ENCODE measurements at regions of chr16 and their contacts with region 1.

Region 1: GRCh38 chr16:81863630-81864352 is 84.7 kb downstream of the PLCG2 start:
- DNase-seq: no peak
- H3K4me3 ChIP-seq: no peak overlapping the region
- H3K27ac ChIP-seq: no peak overlapping the region
- H3K4me1 ChIP-seq: peaks cover 0 to 8% of the 10 kb centered on the region in 2 donors
- H3K27me3 ChIP-seq: no peaks in the 10 kb centered on the region
- CTCF ChIP-seq: no peak
- POLR2A ChIP-seq: no peak

Region 2: DNA sequence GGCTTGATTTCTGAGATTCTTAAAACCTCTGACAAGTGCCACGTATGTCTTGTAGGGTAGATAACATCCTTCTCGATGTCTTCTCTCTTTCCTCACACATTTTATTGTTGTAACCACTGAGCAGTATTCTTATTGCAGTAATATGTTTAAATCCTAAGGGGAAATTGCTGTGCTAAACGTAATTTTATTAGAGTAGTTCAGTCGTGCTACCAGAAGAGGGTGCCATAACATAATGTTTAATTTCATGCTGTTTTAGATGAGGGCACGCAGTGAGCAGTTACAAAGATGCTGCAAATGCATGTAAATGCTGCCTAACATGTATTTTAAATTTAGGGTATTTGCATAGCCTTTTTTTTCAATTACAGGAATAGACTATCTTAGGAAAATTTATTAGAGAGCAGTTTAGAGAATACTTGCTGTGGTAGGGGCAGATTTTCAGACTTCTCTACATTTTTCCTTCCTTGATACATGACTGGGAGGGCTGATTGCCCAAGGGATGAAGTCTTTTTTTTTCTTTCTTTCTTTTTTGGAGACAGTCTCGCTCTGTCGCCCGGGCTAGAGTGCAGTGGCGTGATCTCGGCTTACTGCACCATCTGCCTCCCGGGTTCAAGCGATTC is 497.4 kb before region 1 on chr16:
- intact Hi-C with region 1: loop called (anchors 10 kb)
- DNase-seq: no peak
- H3K4me3 ChIP-seq: no peak overlapping the region
- H3K27ac ChIP-seq: no peak overlapping the region
- H3K4me1 ChIP-seq: no peaks in the 10 kb centered on the region
- H3K27me3 ChIP-seq: no peaks in the 10 kb centered on the region
- CTCF ChIP-seq: peak; percentile 13 to 78 (median 56)
- POLR2A ChIP-seq: no peak

Region 3: DNA sequence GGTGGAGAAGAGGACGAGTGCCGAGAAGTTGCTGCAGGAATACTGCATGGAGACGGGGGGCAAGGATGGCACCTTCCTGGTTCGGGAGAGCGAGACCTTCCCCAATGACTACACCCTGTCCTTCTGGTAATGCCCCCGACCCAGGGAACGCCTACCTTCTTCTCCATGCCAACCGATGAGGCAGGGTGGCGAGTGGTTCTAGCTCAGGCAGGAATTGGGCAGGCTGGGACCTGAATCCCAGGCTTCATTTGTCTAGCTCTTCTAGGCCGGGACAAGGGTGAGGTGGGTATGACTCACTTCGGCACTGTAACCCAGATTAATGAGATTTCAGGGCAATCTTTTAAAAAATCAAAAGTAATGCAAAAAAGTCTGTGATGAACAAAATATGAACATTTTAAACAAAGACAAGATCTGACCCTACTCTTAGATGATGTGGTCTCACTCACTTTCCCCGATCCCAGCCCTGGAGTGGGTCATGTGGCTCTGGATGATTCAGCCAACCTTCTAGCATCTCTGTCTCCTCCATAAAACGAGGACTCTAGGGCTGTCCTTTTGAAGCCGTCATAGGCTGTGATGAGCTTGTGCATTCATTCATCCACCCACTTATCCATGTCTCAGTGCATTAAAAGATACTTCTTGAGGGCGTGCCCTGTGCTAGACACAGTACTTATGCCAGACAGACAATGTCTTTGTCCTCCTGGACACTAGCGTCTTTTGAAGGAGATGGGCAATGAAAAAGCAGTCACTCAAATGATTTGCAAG is 44.9 kb after region 1 on chr16:
- intact Hi-C with region 1: no loop called
- DNase-seq: no peak
- H3K4me3 ChIP-seq: no peak overlapping the region
- H3K27ac ChIP-seq: no peak overlapping the region
- H3K4me1 ChIP-seq: no peaks in the 10 kb centered on the region
- H3K27me3 ChIP-seq: no peaks in the 10 kb centered on the region
- CTCF ChIP-seq: no peak
- POLR2A ChIP-seq: no peak

Measured in thyroid gland (tissue), 4 donors.